ENCODE measurements at regions of chr16 and their contacts with region 1.

Region 1: GRCh38 chr16:11224096-11224893 is 31.7 kb downstream of the SOCS1 start:
- DNase-seq: peak; percentile 86
- H3K4me3 Mint-ChIP-seq: peak overlapping the region; percentile 35
- H3K27ac Mint-ChIP-seq: peak overlapping the region; percentile 96
- H3K4me1 Mint-ChIP-seq: peaks cover 51% of the 10 kb centered on the region
- H3K27me3 Mint-ChIP-seq: no peaks in the 10 kb centered on the region

Region 2: DNA sequence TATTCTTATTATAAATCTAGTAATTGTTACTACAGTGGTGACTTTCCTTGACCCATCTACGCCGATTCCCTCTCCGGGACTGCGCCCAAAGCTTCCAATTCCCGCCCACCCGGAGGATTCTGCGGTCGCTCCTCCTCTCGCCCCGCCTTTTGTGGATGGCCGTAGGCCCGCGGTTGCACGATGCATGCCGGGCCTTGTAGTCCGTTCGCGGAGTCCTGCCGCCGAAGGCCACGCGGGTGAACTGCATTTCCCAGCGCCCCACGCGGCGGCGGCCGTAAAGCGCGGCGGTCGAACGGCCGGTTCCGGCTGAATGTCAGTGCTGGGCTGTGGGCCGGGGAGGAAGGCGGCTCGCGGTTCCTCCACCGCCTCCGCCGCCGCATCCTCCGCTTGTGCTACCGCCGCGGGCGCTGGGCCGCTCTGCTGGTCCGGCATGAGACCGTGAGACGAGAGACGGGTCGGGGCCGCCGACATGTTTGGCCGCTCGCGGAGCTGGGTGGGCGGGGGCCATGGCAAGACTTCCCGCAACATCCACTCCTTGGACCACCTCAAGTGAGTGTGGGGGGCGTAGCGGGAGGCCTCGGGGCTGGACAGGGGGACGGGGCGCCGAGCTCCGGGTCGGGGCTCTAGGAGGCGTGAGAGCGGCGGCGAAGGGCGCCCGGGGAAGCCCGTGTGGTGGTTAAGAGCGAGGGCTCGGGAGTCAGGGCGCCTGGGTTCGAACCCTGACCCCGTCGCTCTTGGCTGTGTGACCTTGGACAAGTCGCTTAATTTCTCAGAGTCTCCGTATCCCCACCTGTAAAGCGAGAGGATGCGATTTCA is 279.8 kb before region 1 on chr16 and contains the start of gene CLEC16A:
- CTCF ChIA-PET with region 1: no interaction called
- intact Hi-C with region 1: loop called (anchors 1 kb)
- DNase-seq: peak; percentile 97
- H3K4me3 Mint-ChIP-seq: peak within 1 kb of the TSS; percentile 81
- H3K27ac Mint-ChIP-seq: peak within 1 kb of the TSS; percentile 70
- H3K4me1 Mint-ChIP-seq: peaks cover 61% of the 10 kb centered on the region
- H3K27me3 Mint-ChIP-seq: no peaks in the 10 kb centered on the region
- total RNA-seq, gene CLEC16A: 18.4 to 20.1 TPM

Region 3: GRCh38 chr16:11114366-11115164 is 109.7 kb before region 1 on chr16:
- CTCF ChIA-PET with region 1: no interaction called
- intact Hi-C with region 1: loop called (anchors 1 kb)
- DNase-seq: peak; percentile 77
- H3K4me3 Mint-ChIP-seq: peak overlapping the region; percentile 23
- H3K27ac Mint-ChIP-seq: peak overlapping the region; percentile 83
- H3K4me1 Mint-ChIP-seq: peaks cover 33% of the 10 kb centered on the region
- H3K27me3 Mint-ChIP-seq: no peaks in the 10 kb centered on the region

Region 4: GRCh38 chr16:11245988-11246387 is 21.7 kb after region 1 on chr16:
- CTCF ChIA-PET with region 1: interaction called, 6 read pairs
- intact Hi-C with region 1: loop called (anchors 1 kb)
- DNase-seq: peak; percentile 57
- H3K4me3 Mint-ChIP-seq: no peak overlapping the region
- H3K27ac Mint-ChIP-seq: no peak overlapping the region
- H3K4me1 Mint-ChIP-seq: peaks cover 42% of the 10 kb centered on the region
- H3K27me3 Mint-ChIP-seq: no peaks in the 10 kb centered on the region

Region 5: DNA sequence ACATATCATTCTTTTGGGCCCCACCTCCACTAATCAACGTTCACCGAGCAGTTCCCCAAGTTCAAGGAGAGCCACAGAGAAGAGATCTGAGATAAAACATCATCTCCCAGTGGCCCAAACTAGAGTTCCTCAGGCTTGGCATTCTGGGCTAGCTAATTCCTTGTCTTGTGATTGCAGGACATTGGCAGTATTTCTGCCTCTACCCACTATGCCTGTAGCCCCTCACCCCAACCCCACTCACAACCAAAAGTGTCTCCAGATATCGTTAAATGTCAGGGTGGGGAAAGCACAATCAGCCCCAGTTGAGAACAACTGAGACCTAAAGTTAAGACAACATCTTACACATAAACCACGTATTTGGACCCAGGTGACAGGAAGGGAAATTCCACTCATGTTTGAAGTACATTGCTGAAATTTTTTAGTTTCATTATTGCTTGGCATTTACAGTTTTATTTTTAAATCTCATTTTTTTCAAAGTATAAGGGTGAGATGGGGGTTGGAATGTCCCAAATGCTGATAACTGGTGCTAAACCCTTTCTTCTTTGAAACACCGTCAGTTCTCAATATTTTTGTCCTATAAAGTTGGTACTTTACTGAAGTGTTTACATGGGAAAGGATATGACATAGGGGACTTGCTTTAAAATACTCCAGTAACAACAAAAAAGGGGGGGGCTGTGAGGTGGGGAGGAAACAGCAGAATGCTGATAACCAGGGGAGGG is 559.2 kb after region 1 on chr16:
- CTCF ChIA-PET with region 1: no interaction called
- intact Hi-C with region 1: loop called (anchors 1 kb)
- DNase-seq: peak; percentile 79
- H3K4me3 Mint-ChIP-seq: peak overlapping the region; percentile 71
- H3K27ac Mint-ChIP-seq: peak overlapping the region; percentile 98
- H3K4me1 Mint-ChIP-seq: peaks cover 72% of the 10 kb centered on the region
- H3K27me3 Mint-ChIP-seq: no peaks in the 10 kb centered on the region

Measured in activated naive CD4-positive, alpha-beta T cell treated with anti-CD3 and anti-CD28 coated beads for 36 hours (primary cell).